T-cell (primary cell): ENCODE measurements at regions of chr2 and their contacts with region 1.

Region 1: DNA sequence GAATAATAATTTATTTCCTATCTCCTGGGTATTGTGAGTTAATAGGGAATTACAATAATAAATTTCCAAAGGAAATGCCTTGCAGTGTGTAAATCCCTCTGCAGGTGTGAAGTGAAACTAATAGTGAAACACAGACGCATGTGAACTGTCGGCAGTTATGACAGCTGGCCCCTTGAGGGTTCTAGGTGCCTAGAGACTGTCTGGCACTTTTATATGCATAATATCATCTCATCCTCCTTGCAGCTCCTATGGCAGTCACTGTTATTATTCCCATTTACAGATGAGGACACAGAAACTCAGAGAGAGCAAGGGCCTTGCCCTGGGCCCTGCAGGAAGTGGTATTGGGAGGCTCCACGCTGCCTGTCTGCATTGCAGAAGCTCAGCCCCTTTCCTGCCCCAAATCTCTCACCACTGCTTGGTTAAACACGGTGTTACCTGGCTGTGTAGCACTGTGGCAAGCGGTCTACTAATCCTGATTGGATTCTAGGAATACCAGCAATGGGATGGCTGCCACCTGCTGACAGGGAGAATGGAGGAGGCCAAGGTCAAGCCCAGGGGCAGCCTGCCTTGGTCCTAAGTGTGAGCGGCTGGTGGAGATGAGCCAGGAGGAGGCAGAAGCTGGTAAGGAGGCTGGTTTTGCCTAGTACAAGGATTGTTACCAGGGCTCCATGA is 32.8 kb upstream of the ACKR3 start:
- DNase-seq: peak; percentile 29 to 74 (median 54)
- ATAC-seq: peak; percentile 97 to 99 (median 98)
- H3K4me3 ChIP-seq: peak overlapping the region; percentile 61 to 73
- H3K4me3 Mint-ChIP-seq: peak overlapping the region; percentile 94 to 97 (median 94)
- H3K27ac ChIP-seq: peak overlapping the region; percentile 65
- H3K27ac Mint-ChIP-seq: peak overlapping the region; percentile 98 to 99
- H3K4me1 ChIP-seq: peaks cover 16 to 30% of the 10 kb centered on the region in 2 experiments
- H3K4me1 Mint-ChIP-seq: peaks cover 54 to 70% (median 65%) of the 10 kb centered on the region in 3 donors
- H3K27me3 ChIP-seq: no peaks in the 10 kb centered on the region
- H3K27me3 Mint-ChIP-seq: no peaks in the 10 kb centered on the region

Region 2: GRCh38 chr2:236512902-236513435 is 23.9 kb before region 1 on chr2:
- CTCF ChIA-PET with region 1: interaction called, 6 to 14 read pairs
- POLR2A ChIA-PET with region 1: no interaction called
- DNase-seq: peak; percentile 33 to 82 (median 67)
- ATAC-seq: peak; percentile 92 to 98 (median 98)
- H3K4me3 ChIP-seq: no peak overlapping the region
- H3K4me3 Mint-ChIP-seq: no peak overlapping the region
- H3K27ac ChIP-seq: no peak overlapping the region
- H3K27ac Mint-ChIP-seq: no peak overlapping the region
- H3K4me1 ChIP-seq: peaks cover 0 to 7% of the 10 kb centered on the region in 2 experiments
- H3K4me1 Mint-ChIP-seq: no peaks in the 10 kb centered on the region
- H3K27me3 ChIP-seq: peaks cover 0 to 5% of the 10 kb centered on the region in 2 experiments
- H3K27me3 Mint-ChIP-seq: peaks cover 0 to 10% of the 10 kb centered on the region in 2 donors

Region 3: DNA sequence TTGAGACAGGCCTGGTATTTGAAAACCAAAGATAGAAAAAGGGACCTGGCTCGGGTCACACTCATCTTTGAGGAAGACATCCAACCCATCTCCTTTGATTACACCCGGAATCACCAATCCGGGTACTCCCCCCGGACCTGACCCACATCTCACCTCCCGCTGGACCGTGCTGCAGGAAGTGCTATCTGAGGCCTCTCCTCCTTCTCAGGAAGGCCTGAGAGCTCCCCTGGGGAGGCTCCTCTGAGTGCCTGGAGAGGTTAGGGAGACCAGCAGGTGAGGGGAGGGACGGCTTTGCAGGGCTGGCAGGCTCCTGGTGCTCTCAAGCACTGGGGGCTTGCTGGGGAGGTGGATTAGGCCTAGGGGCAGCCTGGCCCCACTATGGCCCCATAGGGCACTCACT is 203.6 kb after region 1 on chr2:
- CTCF ChIA-PET with region 1: no interaction called
- POLR2A ChIA-PET with region 1: no interaction called
- DNase-seq: no peak
- ATAC-seq: no peak
- H3K4me3 ChIP-seq: no peak overlapping the region
- H3K4me3 Mint-ChIP-seq: no peak overlapping the region
- H3K27ac ChIP-seq: no peak overlapping the region
- H3K27ac Mint-ChIP-seq: no peak overlapping the region
- H3K4me1 ChIP-seq: no peaks in the 10 kb centered on the region
- H3K4me1 Mint-ChIP-seq: no peaks in the 10 kb centered on the region
- H3K27me3 ChIP-seq: peaks cover 0 to 19% of the 10 kb centered on the region in 2 experiments
- H3K27me3 Mint-ChIP-seq: peaks cover 7 to 20% of the 10 kb centered on the region in 2 donors

Region 4: GRCh38 chr2:237791977-237792727 is 1255.3 kb after region 1 on chr2:
- CTCF ChIA-PET with region 1: no interaction called
- POLR2A ChIA-PET with region 1: no interaction called
- DNase-seq: no peak
- ATAC-seq: no peak
- H3K4me3 ChIP-seq: no peak overlapping the region
- H3K4me3 Mint-ChIP-seq: no peak overlapping the region
- H3K27ac ChIP-seq: no peak overlapping the region
- H3K27ac Mint-ChIP-seq: no peak overlapping the region
- H3K4me1 ChIP-seq: no peaks in the 10 kb centered on the region
- H3K4me1 Mint-ChIP-seq: peaks cover 0 to 6% (median 4%) of the 10 kb centered on the region in 3 donors
- H3K27me3 ChIP-seq: no peaks in the 10 kb centered on the region
- H3K27me3 Mint-ChIP-seq: no peaks in the 10 kb centered on the region